Calu3 (cell line): ENCODE measurements at regions of chr17 and their contacts with region 1.

Region 1: DNA sequence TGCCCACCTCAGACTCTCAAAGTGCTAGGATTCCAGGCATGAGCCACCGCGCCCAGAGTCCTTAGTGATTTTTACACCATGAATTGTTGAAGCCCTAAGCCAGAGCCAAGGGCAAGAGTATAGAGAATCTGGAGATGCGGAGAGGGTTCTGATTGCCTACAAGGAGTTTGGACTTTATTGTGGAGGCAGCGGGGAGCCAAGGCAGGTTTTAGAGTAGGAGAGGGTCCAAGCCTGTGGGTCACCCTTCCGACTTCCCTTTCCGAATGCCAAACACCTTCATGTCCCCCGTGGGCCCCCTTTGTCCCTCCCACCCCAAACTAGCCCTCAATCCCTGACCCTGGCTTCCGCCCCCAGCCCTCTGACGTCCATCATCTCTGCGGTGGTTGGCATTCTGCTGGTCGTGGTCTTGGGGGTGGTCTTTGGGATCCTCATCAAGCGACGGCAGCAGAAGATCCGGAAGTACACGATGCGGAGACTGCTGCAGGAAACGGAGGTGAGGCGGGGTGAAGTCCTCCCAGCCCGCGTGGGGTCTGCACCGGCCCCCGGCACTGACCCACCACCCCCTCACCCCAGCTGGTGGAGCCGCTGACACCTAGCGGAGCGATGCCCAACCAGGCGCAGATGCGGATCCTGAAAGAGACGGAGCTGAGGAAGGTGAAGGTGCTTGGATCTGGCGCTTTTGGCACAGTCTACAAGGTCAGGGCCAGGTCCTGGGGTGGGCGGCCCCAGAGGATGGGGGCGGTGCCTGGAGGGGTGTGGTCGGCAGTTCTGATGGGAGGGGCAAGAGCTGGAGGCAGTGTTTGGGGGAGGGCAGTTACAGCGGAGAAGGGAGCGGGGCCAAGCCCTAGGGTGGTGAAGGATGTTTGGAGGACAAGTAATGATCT is 7.1 kb downstream of the MIEN1 start:
- DNase-seq: peak; percentile 75
- H3K4me3 Mint-ChIP-seq: peak overlapping the region; percentile 0
- H3K27ac Mint-ChIP-seq: peak overlapping the region; percentile 28
- H3K4me1 Mint-ChIP-seq: peaks cover 38% of the 10 kb centered on the region
- H3K27me3 Mint-ChIP-seq: no peaks in the 10 kb centered on the region
- CTCF ChIP-seq: no peak

Region 2: DNA sequence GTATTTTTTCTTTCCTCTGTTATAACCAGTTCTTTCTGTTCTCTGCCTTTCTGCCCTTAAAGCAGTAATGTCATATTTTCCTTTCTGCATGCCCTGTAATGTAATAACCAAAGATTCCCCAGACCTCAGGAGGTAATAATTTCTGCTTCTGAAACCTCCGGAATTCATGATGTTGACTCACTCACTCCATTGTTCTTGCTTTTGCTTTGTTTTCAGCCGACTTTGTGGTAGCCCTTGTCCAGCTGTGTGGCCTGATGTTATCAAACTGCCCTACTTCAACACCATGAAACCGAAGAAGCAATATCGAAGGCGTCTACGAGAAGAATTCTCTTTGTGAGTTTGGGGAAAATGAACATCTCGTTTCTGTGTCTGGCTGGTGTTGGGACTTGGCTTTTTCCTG is 206.0 kb before region 1 on chr17:
- CTCF ChIA-PET with region 1: no interaction called
- intact Hi-C with region 1: no loop called
- DNase-seq: no peak
- H3K4me3 Mint-ChIP-seq: no peak overlapping the region
- H3K27ac Mint-ChIP-seq: no peak overlapping the region
- H3K4me1 Mint-ChIP-seq: no peaks in the 10 kb centered on the region
- H3K27me3 Mint-ChIP-seq: no peaks in the 10 kb centered on the region
- CTCF ChIP-seq: no peak

Region 3: GRCh38 chr17:39527220-39527813 is 195.9 kb before region 1 on chr17:
- CTCF ChIA-PET with region 1: no interaction called
- intact Hi-C with region 1: no loop called
- DNase-seq: peak; percentile 72
- H3K4me3 Mint-ChIP-seq: no peak overlapping the region
- H3K27ac Mint-ChIP-seq: no peak overlapping the region
- H3K4me1 Mint-ChIP-seq: no peaks in the 10 kb centered on the region
- H3K27me3 Mint-ChIP-seq: no peaks in the 10 kb centered on the region
- CTCF ChIP-seq: peak; percentile 97

Region 4: DNA sequence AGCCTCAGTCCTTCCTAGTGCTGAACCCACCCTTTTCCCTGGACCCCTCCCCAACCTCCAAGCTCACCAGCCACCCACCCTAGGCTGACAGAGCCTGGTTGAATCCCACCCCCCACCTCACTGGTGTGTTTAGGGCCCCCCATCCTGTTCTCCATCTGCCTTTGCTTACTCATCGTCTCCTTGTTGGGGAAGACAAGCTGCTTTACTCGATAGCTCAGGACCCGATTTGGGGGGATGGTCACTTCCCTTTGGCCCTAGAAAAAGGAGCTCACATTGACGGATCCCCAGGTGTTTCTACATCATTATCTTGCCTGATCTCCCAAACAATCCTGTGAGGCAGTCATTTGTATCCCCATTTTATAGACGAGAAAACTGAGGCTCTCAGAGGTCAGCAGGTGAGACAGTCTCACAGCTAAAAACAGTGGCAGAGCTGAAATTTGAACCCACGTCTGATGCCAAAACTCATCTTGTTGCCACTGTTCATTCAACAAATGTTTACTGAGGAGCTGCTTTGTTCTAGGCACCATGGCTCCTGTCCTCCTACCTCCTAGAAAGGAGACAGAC is 185.7 kb after region 1 on chr17:
- CTCF ChIA-PET with region 1: interaction called, 679 read pairs
- intact Hi-C with region 1: no loop called
- DNase-seq: peak; percentile 67
- H3K4me3 Mint-ChIP-seq: no peak overlapping the region
- H3K27ac Mint-ChIP-seq: no peak overlapping the region
- H3K4me1 Mint-ChIP-seq: no peaks in the 10 kb centered on the region
- H3K27me3 Mint-ChIP-seq: no peaks in the 10 kb centered on the region
- CTCF ChIP-seq: no peak

Region 5: GRCh38 chr17:39916918-39917317 is 193.7 kb after region 1 on chr17:
- CTCF ChIA-PET with region 1: interaction called, 275 read pairs
- intact Hi-C with region 1: no loop called
- DNase-seq: peak; percentile 94
- H3K4me3 Mint-ChIP-seq: no peak overlapping the region
- H3K27ac Mint-ChIP-seq: no peak overlapping the region
- H3K4me1 Mint-ChIP-seq: peaks cover 24% of the 10 kb centered on the region
- H3K27me3 Mint-ChIP-seq: no peaks in the 10 kb centered on the region
- CTCF ChIP-seq: no peak